Posterior vena cava (tissue), 2 donors: ENCODE measurements at regions of chr10 and their contacts with region 1.

Region 1: DNA sequence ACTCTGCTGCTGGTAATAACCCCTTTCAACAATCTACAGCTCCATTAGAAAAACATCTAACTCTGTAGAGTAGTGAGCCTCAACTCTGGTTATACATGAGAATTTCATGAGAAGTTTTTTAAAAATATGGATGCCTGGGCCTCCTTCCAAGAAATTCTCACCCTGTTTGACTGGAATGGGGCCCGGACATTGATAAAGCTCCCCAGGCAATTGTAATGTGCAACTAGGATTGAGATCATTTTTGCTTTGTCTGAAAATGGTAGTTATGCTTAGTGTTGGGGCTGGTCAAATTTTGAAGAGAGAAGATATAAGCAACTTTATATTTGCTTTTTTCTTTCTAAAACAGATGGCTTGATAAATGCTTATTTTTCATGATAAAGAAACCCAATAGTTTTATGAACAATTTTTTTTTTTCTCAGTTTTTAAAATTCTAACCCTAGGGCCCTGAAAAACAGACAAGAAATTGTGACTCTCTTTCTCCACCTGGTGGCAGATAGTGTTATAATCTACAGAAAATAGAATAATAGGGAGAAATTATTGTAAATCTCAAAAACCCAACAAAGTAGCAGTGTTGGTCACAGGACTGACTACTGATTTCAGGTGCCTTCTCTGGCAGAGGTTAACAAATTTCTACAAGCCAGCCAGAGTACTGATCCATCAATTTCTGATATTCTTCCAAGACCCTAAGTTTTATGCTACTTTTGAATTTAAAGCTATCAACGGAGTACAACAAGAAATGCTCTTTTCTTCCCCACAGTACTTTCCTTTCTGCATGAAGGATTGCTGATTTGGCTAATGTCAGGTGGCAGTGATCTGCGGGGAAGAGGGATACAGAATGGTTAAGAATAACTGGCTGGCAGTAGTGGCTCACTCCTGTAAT is 174.8 kb downstream of the DKK1 start:
- DNase-seq: no peak

Region 2: GRCh38 chr10:52308251-52309031 is 180.4 kb before region 1 on chr10:
- intact Hi-C with region 1: loop called in 1 of 2 experiments (anchors 2 kb)
- DNase-seq: peak; percentile 83

Region 3: GRCh38 chr10:52319926-52320325 is 168.9 kb before region 1 on chr10:
- intact Hi-C with region 1: loop called in 1 of 2 experiments (anchors 10 kb)
- DNase-seq: no peak

Region 4: DNA sequence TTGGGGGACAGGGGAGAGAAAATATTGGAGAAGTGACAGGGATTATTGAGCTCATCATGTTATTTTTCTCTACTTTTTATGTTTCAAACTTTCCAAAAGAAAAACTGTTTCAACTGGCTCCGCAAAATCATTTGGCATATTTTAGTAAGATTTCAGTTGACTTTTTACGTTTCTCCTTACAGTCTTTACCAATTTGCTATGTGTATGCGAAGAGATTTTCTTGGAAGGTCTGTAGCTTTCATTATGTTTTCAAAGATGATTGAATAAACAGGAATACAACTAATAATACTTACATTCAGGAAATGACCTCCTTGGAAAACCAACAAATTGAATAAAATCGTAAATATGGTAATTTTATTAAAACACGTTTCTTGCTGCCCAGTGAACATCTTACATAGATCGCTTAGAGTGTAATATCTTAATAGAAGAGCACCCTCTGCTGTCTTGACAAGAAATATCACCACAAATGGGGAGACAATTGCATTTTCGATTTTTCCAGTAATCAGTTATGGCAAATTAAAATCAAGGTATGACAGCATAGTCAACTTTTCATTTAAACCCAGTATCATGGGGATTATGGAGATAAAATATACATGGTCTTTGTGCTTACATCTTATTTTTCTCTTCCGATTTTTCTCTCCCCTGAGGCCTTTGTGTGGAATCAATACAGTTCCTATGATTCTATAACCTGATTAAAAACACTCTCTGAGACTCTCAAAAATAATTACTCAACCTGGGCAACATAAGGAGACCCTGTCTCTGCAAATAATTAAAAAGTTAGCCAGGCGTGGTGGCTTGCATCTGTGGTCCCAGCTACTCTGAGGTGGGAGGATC is 240.6 kb after region 1 on chr10:
- intact Hi-C with region 1: no loop called
- DNase-seq: no peak

Region 5: DNA sequence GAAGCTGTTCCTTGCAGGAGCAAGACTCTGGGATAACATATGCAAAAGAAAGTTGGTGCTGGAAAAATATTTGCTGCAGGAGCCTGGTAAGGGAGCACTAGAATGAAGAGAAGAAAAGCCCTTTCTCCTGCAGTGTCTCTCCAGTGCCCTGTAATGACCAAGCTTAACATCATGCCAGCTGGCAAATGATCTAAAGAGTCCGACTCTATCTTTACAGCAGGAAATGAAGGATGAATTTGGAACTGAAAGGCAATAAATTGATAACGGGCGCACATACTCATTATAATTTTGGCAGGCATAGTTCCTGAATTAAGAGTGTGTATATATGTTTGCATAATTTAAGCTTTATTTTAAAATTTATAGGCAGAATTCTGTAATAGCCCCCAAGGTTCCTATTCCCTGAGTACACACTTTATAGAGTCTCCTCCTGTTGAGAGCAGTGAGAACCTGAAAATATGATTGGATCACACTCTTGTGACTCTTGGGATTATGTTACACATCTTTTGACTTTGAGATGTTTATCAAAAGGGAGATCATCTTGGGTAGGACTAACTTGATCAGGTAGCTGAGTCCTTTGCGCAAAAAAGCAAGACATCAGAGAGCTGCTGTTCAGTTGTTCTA is 582.8 kb after region 1 on chr10:
- intact Hi-C with region 1: no loop called
- DNase-seq: no peak